CD14-positive monocyte (primary cell): ENCODE measurements at regions of chr16 and their contacts with region 1.

Region 1: DNA sequence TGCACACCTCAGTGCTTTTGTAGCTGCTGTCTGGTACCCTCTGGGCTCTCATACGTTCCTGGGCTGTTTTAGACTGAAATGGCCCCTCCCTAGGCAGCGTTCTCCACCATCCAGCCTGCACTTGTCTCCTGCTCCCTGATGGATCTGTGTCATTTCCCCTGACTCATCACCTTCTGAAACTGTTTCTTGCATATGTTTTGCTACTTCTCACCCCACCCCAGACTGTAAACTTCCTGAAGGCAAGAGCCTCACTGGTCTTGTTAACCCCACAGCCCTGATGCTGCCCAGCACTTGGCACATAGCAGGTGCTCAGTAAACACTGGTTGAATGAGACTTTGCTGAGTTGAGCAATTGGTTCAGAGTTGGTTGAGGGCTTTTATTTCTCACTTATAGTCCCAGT is 78.7 kb downstream of the CRISPLD2 start:
- DNase-seq: peak; percentile 85 to 98 (median 89)
- H3K4me3 ChIP-seq: peak overlapping the region in 1 of 3 experiments; percentile 44
- H3K4me3 Mint-ChIP-seq: peak overlapping the region; percentile 53 to 66
- H3K27ac ChIP-seq: peak overlapping the region; percentile 96 to 98
- H3K27ac Mint-ChIP-seq: peak overlapping the region; percentile 96 to 99 (median 99)
- H3K4me1 ChIP-seq: peaks cover 59 to 67% of the 10 kb centered on the region in 2 donors
- H3K4me1 Mint-ChIP-seq: peaks cover 62% of the 10 kb centered on the region
- H3K27me3 ChIP-seq: no peaks in the 10 kb centered on the region
- H3K27me3 Mint-ChIP-seq: peaks cover 0 to 3% (median 2%) of the 10 kb centered on the region in 3 donors
- CTCF ChIP-seq: no peak

Region 2: DNA sequence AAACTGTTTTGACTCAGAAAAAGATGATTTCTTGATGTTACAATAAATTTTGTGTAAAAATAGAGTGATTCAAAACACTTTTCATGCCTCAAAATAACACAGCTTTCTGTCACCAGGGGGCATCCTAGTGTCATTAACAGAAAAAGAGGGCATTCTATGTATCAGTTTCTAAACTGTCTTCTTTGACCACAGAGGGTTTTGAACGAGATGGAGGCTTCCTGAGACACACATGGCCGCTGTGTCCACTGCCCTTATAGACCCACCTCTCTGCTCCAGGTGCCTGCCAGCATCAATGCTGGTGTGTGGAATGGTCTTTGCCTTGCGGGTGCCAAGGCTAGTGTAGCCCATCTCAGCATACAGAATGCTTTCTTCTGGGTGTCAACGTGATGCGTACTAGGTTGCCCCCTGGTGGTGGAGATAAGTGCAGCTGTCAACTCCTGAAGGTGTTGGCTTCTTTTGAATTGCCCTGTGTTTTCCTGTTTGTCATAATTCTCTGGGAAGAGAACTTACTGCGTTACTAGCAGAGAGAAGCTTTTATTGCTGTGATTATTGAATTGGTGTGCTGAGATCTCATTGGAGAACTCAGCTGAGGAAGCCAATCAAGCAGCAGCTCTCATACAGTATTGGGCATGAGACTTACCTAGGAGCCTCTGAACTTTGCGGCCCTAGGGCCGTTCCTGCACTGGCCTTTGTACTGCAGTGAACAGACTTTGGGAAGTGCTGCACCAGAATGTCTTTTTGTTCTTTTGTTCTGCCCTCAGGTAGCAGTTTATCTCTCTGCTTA is 160.0 kb before region 1 on chr16:
- intact Hi-C with region 1: loop called in 1 of 2 experiments (anchors 5 kb)
- DNase-seq: peak; percentile 75 to 82 (median 80)
- H3K4me3 ChIP-seq: peak overlapping the region; percentile 17 to 70 (median 53)
- H3K4me3 Mint-ChIP-seq: peak overlapping the region; percentile 80 to 86
- H3K27ac ChIP-seq: peak overlapping the region in 1 of 2 donors; percentile 77
- H3K27ac Mint-ChIP-seq: peak overlapping the region; percentile 64 to 90 (median 85)
- H3K4me1 ChIP-seq: peaks cover 59 to 62% of the 10 kb centered on the region in 2 donors
- H3K4me1 Mint-ChIP-seq: peaks cover 51% of the 10 kb centered on the region
- H3K27me3 ChIP-seq: no peaks in the 10 kb centered on the region
- H3K27me3 Mint-ChIP-seq: peaks cover 0 to 2% (median 0%) of the 10 kb centered on the region in 3 donors
- CTCF ChIP-seq: peak; percentile 99

Region 3: DNA sequence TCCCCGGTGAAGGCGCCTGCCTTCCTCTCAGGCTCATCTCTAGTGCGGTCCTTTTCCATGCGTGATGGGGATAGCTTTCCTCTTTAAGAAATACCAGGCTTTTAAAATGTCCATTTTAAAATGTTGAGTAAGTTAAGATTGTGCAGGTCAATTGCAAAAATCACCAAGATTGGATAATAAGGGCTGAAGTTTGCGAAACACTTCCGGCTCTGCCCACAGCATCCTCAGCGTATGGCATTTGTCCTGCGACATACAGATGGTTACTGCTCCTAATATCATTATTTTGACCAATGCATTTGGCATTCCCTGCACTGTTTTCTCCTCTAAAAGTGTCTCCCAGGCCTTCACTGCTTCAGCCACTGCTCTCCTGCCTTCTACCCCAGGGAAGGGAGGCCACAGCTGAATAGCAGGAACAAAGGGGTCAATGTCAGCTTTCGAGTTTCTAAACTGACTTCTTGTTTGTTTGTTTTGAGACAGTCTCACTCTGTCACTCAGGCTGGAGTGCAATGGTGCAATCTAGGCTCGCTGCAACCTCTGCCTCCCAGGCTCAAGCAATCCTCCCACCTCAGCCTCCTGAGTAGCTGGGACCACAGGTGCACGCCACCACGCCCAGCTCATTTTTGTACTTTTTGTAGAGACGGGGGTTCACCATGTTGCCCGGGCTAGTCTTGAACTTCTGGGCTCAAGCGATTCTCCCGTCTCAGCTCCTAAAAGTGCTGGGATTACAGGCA is 13.2 kb after region 1 on chr16:
- intact Hi-C with region 1: loop called in 1 of 2 experiments (anchors 2 kb)
- DNase-seq: peak; percentile 83 to 92 (median 87)
- H3K4me3 ChIP-seq: peak overlapping the region in 1 of 3 experiments; percentile 53
- H3K4me3 Mint-ChIP-seq: peak overlapping the region; percentile 73 to 81
- H3K27ac ChIP-seq: peak overlapping the region; percentile 87 to 89
- H3K27ac Mint-ChIP-seq: peak overlapping the region; percentile 96 to 99 (median 98)
- H3K4me1 ChIP-seq: peaks cover 74 to 81% of the 10 kb centered on the region in 2 donors
- H3K4me1 Mint-ChIP-seq: peaks cover 79% of the 10 kb centered on the region
- H3K27me3 ChIP-seq: no peaks in the 10 kb centered on the region
- H3K27me3 Mint-ChIP-seq: peaks cover 5 to 7% (median 7%) of the 10 kb centered on the region in 3 donors
- CTCF ChIP-seq: no peak